ENCODE measurements at regions of chr10 and their contacts with region 1.

Region 1: DNA sequence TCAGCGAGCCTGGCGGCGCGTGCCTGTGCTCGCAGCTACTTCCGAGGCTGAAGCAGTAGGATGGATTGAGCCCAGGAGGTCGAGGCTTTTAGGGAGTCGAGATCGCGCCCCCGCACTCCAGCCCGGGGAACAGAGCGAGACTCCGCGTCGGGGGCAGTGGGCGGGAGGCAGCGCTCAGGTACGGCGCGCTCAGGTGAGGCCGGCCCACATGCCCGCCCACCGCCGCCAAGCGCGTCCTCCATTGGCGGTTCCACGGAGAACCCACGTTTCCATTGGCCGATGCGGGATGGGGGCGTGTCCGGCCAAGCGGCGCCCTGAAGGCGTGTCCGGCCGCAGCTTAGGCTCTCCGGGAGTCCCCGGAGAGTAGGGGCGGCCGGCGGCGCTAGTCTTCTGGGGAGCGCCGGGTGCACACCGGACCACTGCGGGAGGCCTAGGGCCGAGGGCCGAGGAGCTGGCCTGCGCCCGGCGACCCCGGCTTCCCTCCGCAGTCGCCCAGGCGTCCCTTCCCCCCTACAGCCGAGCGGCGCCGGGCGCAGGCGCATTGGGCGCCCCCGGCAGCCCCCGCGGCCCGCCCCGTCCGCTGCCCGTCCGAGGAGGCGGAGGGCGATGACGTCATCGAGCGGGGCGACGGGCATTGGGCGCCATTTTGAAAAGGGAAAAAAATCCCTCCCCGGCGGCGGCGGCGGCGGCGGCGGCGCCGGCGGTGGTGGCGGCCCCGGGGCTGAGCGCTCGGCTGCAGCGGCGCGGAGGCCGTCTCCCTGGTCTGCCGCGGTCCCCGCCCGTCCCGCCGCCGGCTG is at the start of gene PPP2R2D:
- DNase-seq: peak; percentile 93 to 99 (median 96)
- ATAC-seq: peak; percentile 83 to 85
- H3K4me3 Mint-ChIP-seq: peak within 1 kb of the TSS; percentile 84 to 93 (median 88)
- H3K27ac Mint-ChIP-seq: peak within 1 kb of the TSS; percentile 92 to 94 (median 93)
- H3K4me1 Mint-ChIP-seq: peaks cover 22 to 71% (median 63%) of the 10 kb centered on the region in 4 donors
- H3K27me3 Mint-ChIP-seq: peaks cover 0 to 10% (median 2%) of the 10 kb centered on the region in 5 donors
- polyA plus RNA-seq, gene PPP2R2D: 22.7 to 38.3 (median 26.9) TPM

Region 2: DNA sequence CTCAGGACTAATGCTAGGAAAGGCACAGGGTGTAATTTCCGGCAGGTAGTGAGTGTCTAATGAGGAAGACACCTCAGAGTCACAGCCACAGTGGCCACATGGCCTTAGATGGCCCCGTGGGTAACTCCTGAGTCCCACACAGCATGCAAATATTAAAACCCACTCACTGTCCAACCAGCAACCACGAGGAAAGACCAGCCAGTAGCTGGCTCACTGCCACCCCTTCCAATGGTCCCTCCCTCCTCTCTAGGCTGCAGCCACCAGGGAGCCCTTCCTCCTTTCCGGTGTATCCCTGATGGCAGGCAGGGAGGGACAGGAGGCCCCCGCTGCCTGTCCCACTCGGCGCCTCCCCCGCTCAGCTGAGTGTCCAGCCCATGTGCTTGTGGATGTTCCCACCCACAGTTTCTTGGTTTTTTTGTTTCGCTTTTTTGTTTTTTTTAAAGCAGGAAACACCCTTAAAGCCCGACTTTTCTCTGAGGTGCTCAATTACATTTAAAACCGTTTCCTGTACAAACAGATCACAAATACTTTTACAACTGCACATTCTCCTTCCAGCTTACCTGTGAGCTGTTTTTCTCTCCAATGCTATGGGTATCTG is 72.0 kb after region 1 on chr10:
- POLR2A ChIA-PET with region 1: interaction called, 26 read pairs
- DNase-seq: peak in 8 of 10 donors; percentile 14 to 77 (median 40)
- ATAC-seq: peak; percentile 72 to 78
- H3K4me3 Mint-ChIP-seq: peak overlapping the region; percentile 78 to 98 (median 87)
- H3K27ac Mint-ChIP-seq: peak overlapping the region; percentile 85 to 95 (median 94)
- H3K4me1 Mint-ChIP-seq: peaks cover 51 to 82% (median 65%) of the 10 kb centered on the region in 4 donors
- H3K27me3 Mint-ChIP-seq: no peaks in the 10 kb centered on the region

Region 3: DNA sequence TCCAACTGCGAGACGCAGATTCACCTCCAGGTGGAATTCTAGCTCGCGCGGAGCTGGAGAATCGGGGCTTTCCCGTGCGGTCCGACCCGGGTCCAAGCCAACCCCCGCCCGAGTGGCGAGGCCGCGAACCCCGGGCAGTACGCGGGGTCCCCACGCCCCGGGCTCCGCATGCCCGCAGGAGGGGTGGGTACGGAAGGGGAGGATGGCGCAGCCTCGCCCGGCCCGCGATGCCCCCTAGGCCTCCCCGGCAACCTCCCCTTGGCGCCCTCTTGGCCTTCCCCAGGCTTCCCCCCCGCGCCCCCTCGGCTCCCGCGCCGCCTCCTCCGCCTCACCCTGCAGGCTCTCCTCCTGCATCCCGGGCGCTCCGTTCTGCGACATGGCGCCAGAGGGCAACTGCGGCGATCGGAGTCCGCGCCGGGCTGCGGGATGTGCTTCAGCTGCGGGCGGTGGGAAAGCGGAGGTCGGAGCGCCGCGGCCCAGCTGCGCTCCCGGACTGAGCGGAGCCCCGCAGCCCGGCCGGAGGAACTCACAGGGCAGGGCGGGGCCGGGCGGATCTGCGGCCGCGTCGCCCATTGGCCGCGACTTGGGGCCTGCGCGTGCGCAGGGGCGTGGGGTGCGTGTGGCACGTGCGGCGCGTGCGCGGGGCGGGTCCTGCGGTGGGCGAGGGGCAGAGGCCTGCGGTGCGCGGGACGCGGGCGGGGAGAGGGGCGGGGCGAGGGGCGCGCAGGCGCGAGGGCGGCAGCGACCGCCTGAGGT is 81.1 kb after region 1 on chr10 and contains the start of gene BNIP3:
- POLR2A ChIA-PET with region 1: interaction called, 14 read pairs
- DNase-seq: peak; percentile 89 to 97 (median 94)
- ATAC-seq: peak; percentile 84 to 90
- H3K4me3 Mint-ChIP-seq: peak within 1 kb of the TSS; percentile 82 to 91 (median 88)
- H3K27ac Mint-ChIP-seq: peak within 1 kb of the TSS; percentile 51 to 94 (median 82)
- H3K4me1 Mint-ChIP-seq: peaks cover 24 to 49% (median 45%) of the 10 kb centered on the region in 4 donors
- H3K27me3 Mint-ChIP-seq: peaks cover 0 to 2% (median 0%) of the 10 kb centered on the region in 5 donors
- polyA plus RNA-seq, gene BNIP3: 30.8 to 38.9 (median 37.5) TPM